ENCODE measurements at regions of chr2 and their contacts with region 1.

Region 1: DNA sequence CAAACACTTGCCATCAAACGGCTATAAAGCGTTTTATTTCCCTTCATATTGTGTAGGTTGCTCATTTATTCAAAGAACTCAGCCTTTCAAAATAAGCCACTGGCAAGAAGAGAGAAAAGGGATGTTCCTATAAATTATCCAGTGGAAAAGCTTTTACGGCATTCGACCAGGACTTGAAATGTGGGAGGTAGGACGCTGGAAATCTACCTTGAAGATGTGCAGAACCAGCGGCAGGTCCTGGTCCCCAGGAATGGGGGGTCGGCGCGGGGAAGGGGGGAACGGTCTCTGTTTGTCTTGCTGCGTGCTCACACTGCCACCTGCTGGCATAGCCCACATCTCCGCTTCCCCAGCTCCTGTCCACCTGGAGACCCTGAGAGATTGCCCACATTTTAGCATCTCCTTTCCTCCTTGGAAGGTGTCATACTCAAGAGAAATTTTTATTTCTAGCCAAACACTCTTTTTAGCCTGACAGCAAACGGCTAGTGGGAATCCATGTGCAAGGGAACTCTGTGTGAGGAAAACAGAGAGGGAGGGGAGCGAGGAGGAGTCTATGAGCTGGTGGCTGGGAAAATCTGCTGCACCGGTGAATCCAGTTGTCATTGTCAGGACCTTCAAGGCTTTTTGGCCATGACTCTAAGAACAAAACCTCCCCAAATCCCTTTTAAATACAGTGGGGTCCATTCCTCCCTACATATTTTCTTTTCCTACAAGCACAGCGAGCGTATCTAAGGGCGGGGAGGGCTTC is 349.0 kb upstream of the PKDCC start:
- DNase-seq: no peak
- H3K4me3 ChIP-seq: no peak overlapping the region
- H3K27me3 ChIP-seq: no peaks in the 10 kb centered on the region
- CTCF ChIP-seq: peak; percentile 77

Region 2: GRCh38 chr2:41087946-41088345 is 610.9 kb before region 1 on chr2:
- CTCF ChIA-PET with region 1: no interaction called
- POLR2A ChIA-PET with region 1: no interaction called
- DNase-seq: no peak
- H3K4me3 ChIP-seq: no peak overlapping the region
- H3K27me3 ChIP-seq: no peaks in the 10 kb centered on the region
- CTCF ChIP-seq: no peak

Region 3: GRCh38 chr2:41414486-41415230 is 284.2 kb before region 1 on chr2:
- CTCF ChIA-PET with region 1: interaction called, 27 read pairs
- POLR2A ChIA-PET with region 1: no interaction called
- DNase-seq: no peak
- H3K4me3 ChIP-seq: no peak overlapping the region
- H3K27me3 ChIP-seq: no peaks in the 10 kb centered on the region
- CTCF ChIP-seq: peak; percentile 51